Activated CD8-positive, alpha-beta memory T cell treated with anti-CD3 and anti-CD28 coated beads, Interleukin-2, amount 10 ng/mL, durations not matched to agents 7 days and 5 days (primary cell): ENCODE measurements at regions of chr22 and their contacts with region 1.

Region 1: GRCh38 chr22:22342697-22343580 is 98.4 kb downstream of the VPREB1 start:
- DNase-seq: peak; percentile 73
- ATAC-seq: peak; percentile 75
- H3K4me3 Mint-ChIP-seq: no peak overlapping the region
- H3K27ac Mint-ChIP-seq: peak overlapping the region; percentile 29
- H3K4me1 Mint-ChIP-seq: peaks cover 30% of the 10 kb centered on the region
- H3K27me3 Mint-ChIP-seq: peaks cover 31% of the 10 kb centered on the region

Region 2: DNA sequence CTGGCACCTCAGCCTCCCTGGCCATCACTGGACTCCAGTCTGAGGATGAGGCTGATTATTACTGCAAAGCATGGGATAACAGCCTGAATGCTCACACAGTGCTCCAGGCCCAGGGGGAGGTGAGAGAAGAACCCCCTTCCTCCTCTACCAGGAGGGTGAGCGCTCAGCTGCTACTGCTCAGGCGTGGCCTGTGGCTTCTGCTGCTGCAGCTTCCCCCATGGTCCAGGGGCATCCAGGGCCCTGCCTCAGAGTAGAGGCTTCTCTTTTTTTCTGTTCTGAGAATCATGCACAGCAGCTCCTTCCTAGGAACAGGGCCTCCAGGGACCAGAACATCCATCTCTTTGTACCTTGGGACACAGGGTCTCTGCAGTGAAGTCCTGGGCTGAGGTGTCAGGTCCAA is 15.2 kb before region 1 on chr22:
- CTCF ChIA-PET with region 1: interaction called, 16 read pairs
- DNase-seq: no peak
- ATAC-seq: no peak
- H3K4me3 Mint-ChIP-seq: no peak overlapping the region
- H3K27ac Mint-ChIP-seq: no peak overlapping the region
- H3K4me1 Mint-ChIP-seq: peaks cover 5% of the 10 kb centered on the region
- H3K27me3 Mint-ChIP-seq: peaks cover 21% of the 10 kb centered on the region